ENCODE measurements at regions of chr14 and their contacts with region 1.

Region 1: GRCh38 chr14:89915114-89915878 is 39.2 kb downstream of the EFCAB11 start:
- DNase-seq: peak; percentile 19
- ATAC-seq: peak; percentile 54
- H3K4me3 Mint-ChIP-seq: no peak overlapping the region
- H3K27ac Mint-ChIP-seq: no peak overlapping the region
- H3K4me1 Mint-ChIP-seq: peaks cover 3% of the 10 kb centered on the region
- H3K27me3 Mint-ChIP-seq: no peaks in the 10 kb centered on the region
- CTCF ChIP-seq: peak; percentile 94

Region 2: DNA sequence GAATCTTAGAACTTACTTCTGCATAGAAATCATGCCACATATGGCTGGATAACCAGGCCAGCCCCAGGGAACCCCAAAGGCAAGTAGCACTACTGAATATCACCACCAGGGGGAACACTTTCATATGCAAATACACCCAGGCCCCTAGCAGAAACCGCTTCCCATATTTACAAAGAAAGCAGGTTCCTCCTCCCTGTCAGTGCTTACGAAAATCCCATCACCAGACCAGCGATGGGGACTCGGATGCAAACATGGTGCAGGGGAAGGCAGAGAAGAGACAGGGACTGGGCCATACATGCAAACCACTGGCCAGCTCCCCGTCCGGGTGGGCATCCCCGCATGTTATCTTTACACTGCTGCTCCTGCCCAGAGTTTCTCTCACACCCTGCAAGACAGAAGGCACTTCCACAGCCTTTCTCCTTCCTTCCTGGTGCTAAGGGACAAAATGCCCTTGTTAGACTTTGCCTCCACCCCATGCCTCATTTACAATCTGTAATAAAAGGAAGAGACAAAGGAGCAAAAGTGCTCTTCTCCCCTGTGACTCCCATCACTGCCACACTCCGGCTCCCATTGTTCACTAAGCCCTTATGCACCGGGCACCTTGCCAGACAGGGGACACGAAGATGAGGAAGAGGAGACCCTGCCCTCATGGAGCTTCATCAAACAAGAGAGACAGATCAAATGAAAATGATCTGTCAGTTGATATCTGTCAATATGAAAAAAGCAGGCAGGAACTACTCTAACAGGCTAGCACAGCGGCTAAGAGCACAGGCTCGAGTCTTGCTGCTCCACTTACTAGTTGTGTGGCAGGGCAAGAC is 1422.8 kb before region 1 on chr14:
- CTCF ChIA-PET with region 1: no interaction called
- POLR2A ChIA-PET with region 1: no interaction called
- intact Hi-C with region 1: loop called (anchors 1 kb)
- DNase-seq: peak; percentile 16
- ATAC-seq: peak; percentile 72
- H3K4me3 Mint-ChIP-seq: no peak overlapping the region
- H3K27ac Mint-ChIP-seq: no peak overlapping the region
- H3K4me1 Mint-ChIP-seq: peaks cover 2% of the 10 kb centered on the region
- H3K27me3 Mint-ChIP-seq: no peaks in the 10 kb centered on the region
- CTCF ChIP-seq: no peak

Region 3: GRCh38 chr14:89027097-89027740 is 888.1 kb before region 1 on chr14:
- CTCF ChIA-PET with region 1: interaction called, 3 read pairs
- POLR2A ChIA-PET with region 1: no interaction called
- intact Hi-C with region 1: loop called (anchors 1 kb)
- DNase-seq: peak; percentile 67
- ATAC-seq: peak; percentile 92
- H3K4me3 Mint-ChIP-seq: peak overlapping the region; percentile 65
- H3K27ac Mint-ChIP-seq: no peak overlapping the region
- H3K4me1 Mint-ChIP-seq: peaks cover 3% of the 10 kb centered on the region
- H3K27me3 Mint-ChIP-seq: peaks cover 41% of the 10 kb centered on the region
- CTCF ChIP-seq: peak; percentile 54

Region 4: GRCh38 chr14:89336338-89336737 is 579.0 kb before region 1 on chr14:
- CTCF ChIA-PET with region 1: no interaction called
- POLR2A ChIA-PET with region 1: no interaction called
- intact Hi-C with region 1: loop called (anchors 1 kb)
- DNase-seq: no peak
- ATAC-seq: peak; percentile 69
- H3K4me3 Mint-ChIP-seq: no peak overlapping the region
- H3K27ac Mint-ChIP-seq: peak overlapping the region; percentile 66
- H3K4me1 Mint-ChIP-seq: peaks cover 71% of the 10 kb centered on the region
- H3K27me3 Mint-ChIP-seq: no peaks in the 10 kb centered on the region
- CTCF ChIP-seq: no peak

Region 5: DNA sequence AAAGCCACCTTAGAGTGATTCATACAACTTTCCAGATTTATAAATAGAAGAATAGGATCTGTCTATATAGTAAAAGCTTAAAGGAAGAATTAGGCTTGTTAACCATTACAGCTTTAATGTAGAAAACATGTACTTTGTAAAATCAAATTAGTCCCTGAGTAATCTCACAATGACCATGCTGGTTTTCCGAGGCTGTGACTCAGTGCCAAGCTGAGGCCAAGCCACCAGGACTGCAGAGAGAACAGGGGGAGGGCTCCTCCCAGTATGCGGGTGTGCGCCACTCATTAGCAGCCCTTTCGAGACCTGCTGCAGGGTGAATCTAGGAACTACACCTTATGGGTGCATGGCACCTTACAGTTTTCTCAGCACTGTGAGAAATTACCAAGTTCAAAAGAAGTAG is 127.8 kb before region 1 on chr14:
- CTCF ChIA-PET with region 1: no interaction called
- POLR2A ChIA-PET with region 1: no interaction called
- intact Hi-C with region 1: no loop called
- DNase-seq: no peak
- ATAC-seq: no peak
- H3K4me3 Mint-ChIP-seq: no peak overlapping the region
- H3K27ac Mint-ChIP-seq: no peak overlapping the region
- H3K4me1 Mint-ChIP-seq: no peaks in the 10 kb centered on the region
- H3K27me3 Mint-ChIP-seq: no peaks in the 10 kb centered on the region
- CTCF ChIP-seq: no peak

Region 6: GRCh38 chr14:90475298-90475697 is 560.0 kb after region 1 on chr14:
- CTCF ChIA-PET with region 1: no interaction called
- POLR2A ChIA-PET with region 1: no interaction called
- intact Hi-C with region 1: no loop called
- DNase-seq: no peak
- ATAC-seq: no peak
- H3K4me3 Mint-ChIP-seq: no peak overlapping the region
- H3K27ac Mint-ChIP-seq: no peak overlapping the region
- H3K4me1 Mint-ChIP-seq: no peaks in the 10 kb centered on the region
- H3K27me3 Mint-ChIP-seq: peaks cover 9% of the 10 kb centered on the region
- CTCF ChIP-seq: no peak